ENCODE measurements at regions of chr19 and their contacts with region 1.

Region 1: DNA sequence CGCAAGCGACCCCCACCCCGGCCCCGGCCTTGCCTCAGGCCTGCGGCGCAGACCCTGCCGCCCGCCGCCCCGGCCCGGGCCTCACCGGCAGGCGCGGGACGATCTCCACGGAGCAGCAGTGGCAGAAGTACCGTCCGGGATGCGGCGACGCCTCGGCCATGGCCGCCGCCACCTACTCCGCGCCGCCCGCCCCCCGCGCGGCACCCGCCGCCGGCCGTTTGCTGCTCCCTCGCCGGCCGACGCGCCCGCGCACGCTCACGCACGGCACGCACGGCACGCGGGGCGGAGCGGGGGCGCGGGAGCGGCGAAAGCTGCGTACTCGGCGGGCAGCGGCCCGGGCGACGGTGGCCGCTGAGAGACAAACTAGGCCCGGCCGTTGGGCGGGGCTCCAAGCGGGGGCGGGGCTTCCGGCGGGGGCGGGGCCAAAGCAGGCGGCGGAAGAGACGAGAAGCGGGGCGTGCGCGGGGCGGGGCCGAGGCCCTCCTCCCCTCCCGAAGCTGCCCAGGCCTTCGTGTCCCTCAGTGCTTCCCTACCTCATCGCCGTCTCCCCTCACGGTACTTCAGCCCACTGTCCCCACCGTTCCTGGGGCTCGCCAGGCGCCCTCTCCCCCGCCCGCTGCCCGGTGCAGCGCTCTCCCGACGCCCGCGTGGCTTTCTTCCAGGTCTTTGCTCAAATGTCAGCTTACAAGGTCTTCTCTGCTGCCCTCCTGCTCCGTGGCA is at the start of gene RNF126:
- DNase-seq: peak; percentile 73
- ATAC-seq: peak; percentile 24
- H3K4me3 ChIP-seq: peak within 1 kb of the TSS; percentile 76 to 99 (median 96)
- H3K27ac ChIP-seq: peak within 1 kb of the TSS; percentile 96
- H3K4me1 ChIP-seq: peaks cover 53% of the 10 kb centered on the region
- H3K27me3 ChIP-seq: no peaks in the 10 kb centered on the region; a peak in 1 of 5 replicates
- CTCF ChIP-seq: peak; percentile 30; the same call in 1 of the 2 replicates
- EP300 ChIP-seq: no peak; a peak in 1 of 4 replicates
- POLR2A ChIP-seq: peak; percentile 72 to 78
- RAD21 ChIP-seq: no peak
- total RNA-seq, gene RNF126: 18.5 and 34.0 TPM in 2 replicates

Region 2: GRCh38 chr19:543910-544608 is 119.1 kb before region 1 on chr19 and contains the start of gene GZMM:
- CTCF ChIA-PET with region 1: no interaction called
- POLR2A ChIA-PET with region 1: no interaction called
- in situ Hi-C with region 1: no loop called
- intact Hi-C with region 1: no loop called
- DNase-seq: no peak
- ATAC-seq: peak; percentile 13
- H3K4me3 ChIP-seq: no peak within 1 kb of the TSS
- H3K27ac ChIP-seq: no peak within 1 kb of the TSS
- H3K4me1 ChIP-seq: no peaks in the 10 kb centered on the region
- H3K27me3 ChIP-seq: peaks cover 0 to 8% of the 10 kb centered on the region in 2 experiments; a peak in 2 of 5 replicates
- CTCF ChIP-seq: no peak
- EP300 ChIP-seq: no peak
- POLR2A ChIP-seq: peak in 1 of 2 experiments; percentile 46; a peak in 2 of 4 replicates
- RAD21 ChIP-seq: no peak
- total RNA-seq, gene GZMM: not detected in 2 replicates

Region 3: DNA sequence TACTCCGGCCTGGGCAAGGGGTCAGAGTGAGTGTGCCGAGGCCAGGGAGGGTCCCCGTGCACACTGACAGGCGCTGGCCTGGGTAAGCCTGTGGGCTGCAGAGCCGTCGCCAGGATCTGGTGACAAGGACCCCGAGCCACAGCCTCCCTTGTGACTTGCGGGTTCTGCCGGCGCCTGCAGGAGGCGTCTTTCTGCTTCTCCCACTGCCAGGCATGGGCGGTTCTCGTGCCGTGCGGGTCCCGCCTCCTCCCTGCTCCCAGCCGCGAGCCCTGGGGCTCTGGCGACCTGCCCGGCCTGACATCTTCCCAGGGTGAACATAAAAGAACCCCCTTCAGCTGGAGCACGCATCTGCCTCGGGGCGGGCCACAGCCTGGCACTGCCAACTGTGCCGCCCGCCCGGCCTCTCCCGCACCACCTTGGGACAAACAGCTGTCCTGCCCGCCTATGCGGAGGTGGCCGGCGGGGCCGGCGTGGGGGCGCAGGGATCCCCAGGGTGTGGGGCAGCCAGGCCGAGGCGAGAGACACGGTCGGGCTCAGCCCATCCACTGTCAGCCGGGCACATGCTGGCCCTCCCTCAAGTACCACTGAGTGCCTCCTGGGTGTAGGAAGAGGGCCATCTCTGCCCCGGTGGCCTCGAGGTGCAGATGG is 74.9 kb before region 1 on chr19:
- CTCF ChIA-PET with region 1: interaction called, 4 read pairs
- POLR2A ChIA-PET with region 1: no interaction called
- in situ Hi-C with region 1: no loop called
- intact Hi-C with region 1: loop called (anchors 10 kb)
- DNase-seq: peak; percentile 57
- ATAC-seq: peak; percentile 60
- H3K4me3 ChIP-seq: peak overlapping the region in 1 of 3 experiments; percentile 54; a peak in 1 of 6 replicates
- H3K27ac ChIP-seq: no peak overlapping the region
- H3K4me1 ChIP-seq: peaks cover 35% of the 10 kb centered on the region
- H3K27me3 ChIP-seq: peaks cover 10 to 46% of the 10 kb centered on the region in 2 experiments
- CTCF ChIP-seq: peak; percentile 78
- EP300 ChIP-seq: no peak
- POLR2A ChIP-seq: no peak
- RAD21 ChIP-seq: peak; percentile 33

Region 4: DNA sequence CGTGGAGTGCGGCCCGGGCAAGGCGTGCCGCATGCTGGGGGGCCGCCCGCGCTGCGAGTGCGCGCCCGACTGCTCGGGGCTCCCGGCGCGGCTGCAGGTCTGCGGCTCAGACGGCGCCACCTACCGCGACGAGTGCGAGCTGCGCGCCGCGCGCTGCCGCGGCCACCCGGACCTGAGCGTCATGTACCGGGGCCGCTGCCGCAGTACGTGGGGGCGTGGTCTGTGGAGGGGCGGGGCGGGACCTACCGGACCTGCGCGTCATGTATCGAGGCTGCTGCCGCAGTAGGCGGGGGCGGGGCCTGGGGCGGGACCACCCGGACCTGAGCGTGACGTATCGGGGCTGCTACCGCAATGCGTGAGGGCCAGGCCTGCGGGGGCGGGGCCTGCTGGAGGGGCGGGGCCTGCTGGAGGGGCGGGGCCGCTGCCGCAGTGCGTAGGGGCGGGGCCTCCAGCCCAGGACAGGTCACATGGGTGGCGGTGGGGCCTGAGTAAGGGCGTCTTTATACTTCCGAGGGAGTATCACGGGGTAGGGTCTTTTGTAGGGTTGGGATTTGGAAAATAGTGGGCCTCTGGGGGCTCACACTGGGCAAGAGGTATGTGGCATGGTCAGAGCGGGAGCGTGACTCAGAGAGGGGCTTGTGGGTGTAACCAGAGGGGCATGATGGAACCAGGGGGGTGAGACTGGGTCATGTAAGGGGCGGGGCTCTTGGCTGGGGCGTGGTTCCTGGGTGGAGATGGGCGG is 17.3 kb after region 1 on chr19:
- CTCF ChIA-PET with region 1: interaction called, 13 read pairs
- POLR2A ChIA-PET with region 1: interaction called, 20 read pairs
- in situ Hi-C with region 1: no loop called
- intact Hi-C with region 1: no loop called
- DNase-seq: peak; percentile 93
- ATAC-seq: peak; percentile 70
- H3K4me3 ChIP-seq: peak overlapping the region; percentile 61 to 89 (median 63); a peak in 5 of 6 replicates
- H3K27ac ChIP-seq: peak overlapping the region; percentile 95
- H3K4me1 ChIP-seq: peaks cover 38% of the 10 kb centered on the region
- H3K27me3 ChIP-seq: peaks cover 0 to 7% of the 10 kb centered on the region in 2 experiments; a peak in 1 of 5 replicates
- CTCF ChIP-seq: peak; percentile 75
- EP300 ChIP-seq: no peak
- POLR2A ChIP-seq: peak; percentile 58 to 83
- RAD21 ChIP-seq: peak; percentile 88

Region 5: GRCh38 chr19:732148-733069 is 69.3 kb after region 1 on chr19:
- CTCF ChIA-PET with region 1: interaction called, 25 read pairs
- POLR2A ChIA-PET with region 1: interaction called, 3 read pairs
- in situ Hi-C with region 1: loop called (anchors 5 kb)
- intact Hi-C with region 1: loop called (anchors 1 kb)
- DNase-seq: no peak
- ATAC-seq: no peak
- H3K4me3 ChIP-seq: no peak overlapping the region
- H3K27ac ChIP-seq: no peak overlapping the region
- H3K4me1 ChIP-seq: peaks cover 7% of the 10 kb centered on the region
- H3K27me3 ChIP-seq: no peaks in the 10 kb centered on the region
- CTCF ChIP-seq: no peak
- EP300 ChIP-seq: no peak
- POLR2A ChIP-seq: no peak
- RAD21 ChIP-seq: no peak

Region 6: DNA sequence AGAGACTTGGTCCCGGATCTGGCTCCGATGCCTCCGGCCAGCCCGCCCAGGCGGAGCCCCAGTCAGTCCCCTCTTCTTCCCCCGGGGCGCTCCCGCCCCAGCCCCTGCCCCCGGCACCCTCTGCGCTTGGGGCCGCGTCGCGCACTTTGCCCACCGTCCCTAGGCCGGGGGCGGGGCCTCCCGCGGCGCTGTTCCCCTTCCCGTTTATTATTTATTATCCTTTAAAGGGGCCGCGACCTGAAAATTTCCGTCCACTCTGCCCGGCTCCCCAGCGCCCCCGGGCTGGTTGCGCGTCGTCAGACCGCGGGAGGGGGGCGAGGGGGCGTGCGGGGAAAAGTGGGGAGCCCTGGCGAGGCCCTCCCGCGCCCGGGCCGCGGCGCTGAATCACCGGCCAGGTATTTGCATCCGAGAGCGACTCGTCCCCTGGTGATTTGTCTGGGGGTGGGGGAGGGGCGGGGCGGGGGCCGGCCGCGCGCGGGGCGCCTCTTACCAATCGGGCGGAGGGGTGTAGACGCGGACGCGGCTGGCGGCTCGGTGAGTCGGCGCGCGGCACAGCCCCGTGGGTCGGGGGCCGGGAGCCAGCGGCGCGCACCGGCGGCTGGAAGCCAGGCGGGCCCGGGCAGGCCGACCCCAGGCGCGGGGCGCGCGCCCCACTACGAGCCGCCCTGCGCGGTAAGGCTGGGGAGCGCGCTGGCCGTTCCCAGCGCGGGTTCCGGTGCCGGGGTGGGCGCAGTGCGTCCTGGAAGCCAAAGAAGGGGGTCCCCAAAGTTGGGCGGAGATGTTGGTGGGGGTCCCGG is 262.6 kb after region 1 on chr19 and contains the start of gene ARID3A:
- CTCF ChIA-PET with region 1: no interaction called
- POLR2A ChIA-PET with region 1: no interaction called
- in situ Hi-C with region 1: no loop called
- intact Hi-C with region 1: loop called (anchors 10 kb)
- DNase-seq: peak; percentile 82
- ATAC-seq: peak; percentile 63
- H3K4me3 ChIP-seq: peak within 1 kb of the TSS; percentile 88 to 98 (median 96)
- H3K27ac ChIP-seq: peak within 1 kb of the TSS; percentile 92
- H3K4me1 ChIP-seq: peaks cover 45% of the 10 kb centered on the region
- H3K27me3 ChIP-seq: no peaks in the 10 kb centered on the region
- CTCF ChIP-seq: no peak
- EP300 ChIP-seq: peak in 1 of 2 experiments; percentile 32; a peak in 2 of 4 replicates
- POLR2A ChIP-seq: peak in 1 of 2 experiments; percentile 52; a peak in 3 of 4 replicates
- RAD21 ChIP-seq: no peak; the same call in 1 of the 2 replicates
- total RNA-seq, gene ARID3A: 53.8 and 71.3 TPM in 2 replicates

Measured in HepG2 (cell line).